Aorta (tissue), 5 donors: ENCODE measurements at regions of chr16 and their contacts with region 1.

Region 1: GRCh38 chr16:22190776-22191531 is 15.1 kb upstream of the EEF2K start:
- DNase-seq: peak; percentile 100
- ATAC-seq: peak; percentile 92
- H3K4me3 ChIP-seq: no peak overlapping the region
- H3K27ac ChIP-seq: peak overlapping the region; percentile 64 to 68
- H3K4me1 ChIP-seq: no peaks in the 10 kb centered on the region
- H3K27me3 ChIP-seq: no peaks in the 10 kb centered on the region

Region 2: DNA sequence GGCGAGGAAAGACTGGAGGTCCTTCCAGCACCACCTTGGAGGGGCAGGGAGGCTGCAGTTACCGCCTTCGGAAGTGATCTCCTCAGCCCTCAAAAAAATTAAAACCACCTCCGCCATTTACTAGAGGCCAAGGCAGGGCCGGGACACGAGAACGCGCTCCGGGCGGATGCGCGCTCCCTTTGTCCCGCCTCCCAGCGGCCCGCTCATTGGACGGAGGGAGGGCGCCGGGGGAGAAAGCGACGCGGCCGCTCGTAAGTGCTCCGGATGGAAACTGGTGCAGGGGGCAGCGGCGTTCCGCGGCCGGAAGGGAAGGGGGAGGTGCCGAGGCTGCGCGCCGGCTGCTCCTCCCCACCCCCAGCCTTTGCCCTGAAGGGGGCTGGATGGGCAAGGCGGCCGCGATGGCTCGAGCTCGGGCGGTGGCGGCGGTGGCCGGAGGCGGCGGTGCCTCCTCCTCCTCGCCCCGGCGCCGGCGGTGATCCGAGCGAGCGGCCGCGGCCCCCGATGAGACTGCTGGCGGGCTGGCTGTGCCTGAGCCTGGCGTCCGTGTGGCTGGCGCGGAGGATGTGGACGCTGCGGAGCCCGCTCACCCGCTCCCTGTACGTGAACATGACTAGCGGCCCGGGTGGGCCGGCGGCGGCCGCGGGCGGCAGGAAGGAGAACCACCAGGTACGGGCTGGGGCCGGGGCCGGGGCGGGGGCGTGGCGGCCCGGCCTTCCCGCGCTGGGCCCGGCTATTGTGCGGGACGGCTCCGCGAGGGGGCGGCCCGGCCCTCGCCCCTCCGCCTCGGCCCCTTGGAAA is 591.5 kb before region 1 on chr16 and contains the start of gene METTL9:
- intact Hi-C with region 1: loop called in 1 of 2 experiments (anchors 10 kb)
- DNase-seq: peak; percentile 97
- ATAC-seq: peak; percentile 100
- H3K4me3 ChIP-seq: peak within 1 kb of the TSS; percentile 74 to 87
- H3K27ac ChIP-seq: peak within 1 kb of the TSS; percentile 59 to 77
- H3K4me1 ChIP-seq: no peaks in the 10 kb centered on the region
- H3K27me3 ChIP-seq: no peaks in the 10 kb centered on the region
- total RNA-seq, gene METTL9: 50.0 to 67.8 TPM

Region 3: DNA sequence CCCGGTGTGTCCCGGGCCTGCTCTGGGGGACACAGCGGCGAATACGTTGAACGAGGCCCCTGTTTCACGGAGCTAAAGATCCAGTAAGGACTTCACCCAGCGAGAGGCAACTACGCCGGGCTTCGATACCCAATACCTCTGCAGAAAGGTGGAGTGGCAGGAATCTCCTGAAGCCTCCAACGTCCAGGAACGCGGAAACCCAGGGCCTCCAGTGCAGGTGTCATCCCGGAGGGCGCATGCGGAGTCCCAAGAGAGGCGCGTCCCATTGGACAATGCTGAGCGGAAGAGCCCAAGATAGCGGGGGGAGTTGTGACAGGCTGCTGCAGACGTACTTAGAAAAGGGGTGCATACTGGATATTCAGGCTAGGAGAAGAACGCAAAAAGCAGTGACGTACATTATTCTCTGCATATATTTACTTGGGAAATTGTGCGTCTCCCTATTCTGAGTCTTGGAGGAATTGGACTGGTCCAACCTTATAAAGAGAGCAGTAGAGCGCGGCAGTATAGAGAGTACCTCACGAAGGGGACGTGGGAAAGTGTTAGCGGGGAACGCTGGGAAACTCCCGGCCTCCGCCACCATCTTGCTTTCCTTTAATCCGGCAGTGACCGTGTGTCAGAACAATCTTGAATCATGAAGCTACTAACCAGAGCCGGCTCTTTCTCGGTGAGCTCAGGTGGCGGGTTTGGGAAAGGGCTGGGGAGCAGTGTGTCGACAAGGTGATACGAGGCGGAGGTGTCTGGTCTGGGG is 238.0 kb before region 1 on chr16 and contains the start of gene UQCRC2:
- intact Hi-C with region 1: loop called (anchors 2 to 5 kb)
- DNase-seq: peak; percentile 92 to 93
- ATAC-seq: peak; percentile 99
- H3K4me3 ChIP-seq: peak within 1 kb of the TSS; percentile 78 to 88
- H3K27ac ChIP-seq: peak within 1 kb of the TSS; percentile 50 to 88
- H3K4me1 ChIP-seq: peaks cover 2 to 6% of the 10 kb centered on the region in 2 donors
- H3K27me3 ChIP-seq: no peaks in the 10 kb centered on the region
- total RNA-seq, gene UQCRC2: 140 to 143 TPM

Region 4: DNA sequence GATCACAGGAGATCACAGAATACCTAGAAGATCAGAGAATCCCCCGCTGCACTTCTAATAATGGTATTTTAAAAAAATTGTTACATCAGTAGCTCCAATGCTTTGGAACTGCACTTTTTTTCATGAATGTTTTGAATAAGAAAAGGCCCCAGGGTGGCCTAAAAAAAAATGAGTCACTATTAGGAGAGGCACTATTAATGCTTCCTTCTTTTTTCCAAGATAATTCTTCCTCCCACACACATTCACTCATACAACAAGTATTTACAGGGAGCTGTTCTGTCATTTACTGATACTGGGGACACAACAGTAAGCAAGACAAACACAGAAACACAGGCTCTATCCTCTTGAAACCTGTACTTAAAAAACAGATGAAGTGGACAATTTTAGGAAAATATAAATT is 189.4 kb before region 1 on chr16:
- intact Hi-C with region 1: loop called (anchors 1 to 2 kb)
- DNase-seq: no peak
- ATAC-seq: no peak
- H3K4me3 ChIP-seq: no peak overlapping the region
- H3K27ac ChIP-seq: no peak overlapping the region
- H3K4me1 ChIP-seq: no peaks in the 10 kb centered on the region
- H3K27me3 ChIP-seq: no peaks in the 10 kb centered on the region

Region 5: GRCh38 chr16:22077700-22078313 is 113.1 kb before region 1 on chr16:
- intact Hi-C with region 1: loop called in 1 of 2 experiments (anchors 5 kb)
- DNase-seq: peak; percentile 68 to 81
- ATAC-seq: peak; percentile 59
- H3K4me3 ChIP-seq: no peak overlapping the region
- H3K27ac ChIP-seq: no peak overlapping the region
- H3K4me1 ChIP-seq: no peaks in the 10 kb centered on the region
- H3K27me3 ChIP-seq: no peaks in the 10 kb centered on the region

Region 6: GRCh38 chr16:22232277-22233042 is 41.5 kb after region 1 on chr16:
- intact Hi-C with region 1: no loop called
- DNase-seq: no peak
- ATAC-seq: no peak
- H3K4me3 ChIP-seq: no peak overlapping the region
- H3K27ac ChIP-seq: peak overlapping the region in 1 of 2 donors; percentile 17
- H3K4me1 ChIP-seq: no peaks in the 10 kb centered on the region
- H3K27me3 ChIP-seq: no peaks in the 10 kb centered on the region

Region 7: GRCh38 chr16:22250522-22250921 is 59.6 kb after region 1 on chr16:
- intact Hi-C with region 1: no loop called
- DNase-seq: no peak
- ATAC-seq: no peak
- H3K4me3 ChIP-seq: no peak overlapping the region
- H3K27ac ChIP-seq: no peak overlapping the region
- H3K4me1 ChIP-seq: no peaks in the 10 kb centered on the region
- H3K27me3 ChIP-seq: no peaks in the 10 kb centered on the region

Region 8: GRCh38 chr16:22297114-22297878 is 106.3 kb after region 1 on chr16 and contains the start of gene POLR3E:
- intact Hi-C with region 1: loop called (anchors 1 to 2 kb)
- DNase-seq: peak; percentile 99 to 100
- ATAC-seq: peak; percentile 98
- H3K4me3 ChIP-seq: peak within 1 kb of the TSS; percentile 68 to 81
- H3K27ac ChIP-seq: peak within 1 kb of the TSS; percentile 49 to 78
- H3K4me1 ChIP-seq: no peaks in the 10 kb centered on the region
- H3K27me3 ChIP-seq: no peaks in the 10 kb centered on the region
- total RNA-seq, gene POLR3E: 35.8 to 36.7 TPM

Region 9: GRCh38 chr16:22684574-22685458 is 493.9 kb after region 1 on chr16:
- intact Hi-C with region 1: loop called in 1 of 2 experiments (anchors 5 kb)
- DNase-seq: no peak
- ATAC-seq: peak; percentile 23
- H3K4me3 ChIP-seq: no peak overlapping the region
- H3K27ac ChIP-seq: peak overlapping the region; percentile 62 to 74
- H3K4me1 ChIP-seq: peaks cover 0 to 4% of the 10 kb centered on the region in 2 donors
- H3K27me3 ChIP-seq: no peaks in the 10 kb centered on the region